ENCODE measurements at regions of chr1 and their contacts with region 1.

Region 1: GRCh38 chr1:173202430-173203145 is 4.5 kb downstream of the TNFSF4 start:
- DNase-seq: peak; percentile 20

Region 2: GRCh38 chr1:172826096-172826743 is 376.4 kb before region 1 on chr1:
- CTCF ChIA-PET with region 1: interaction called, 12 read pairs
- POLR2A ChIA-PET with region 1: no interaction called
- DNase-seq: peak; percentile 41

Region 3: GRCh38 chr1:173020138-173020750 is 182.3 kb before region 1 on chr1:
- CTCF ChIA-PET with region 1: no interaction called
- POLR2A ChIA-PET with region 1: no interaction called
- DNase-seq: no peak

Measured in HEK293T (cell line).